Activated T-helper 2 cell treated with anti-CD3 and anti-CD28 coated beads, Interferon-gamma antibody, Interleukin-2, Interleukin-4, amounts not matched to agents 10 μg/mL and 5 μg/mL and 100 μg/mL, durations not matched to agents 14 hours and 24 hours and 36 hours (primary cell): ENCODE measurements at regions of chr9 and their contacts with region 1.

Region 1: DNA sequence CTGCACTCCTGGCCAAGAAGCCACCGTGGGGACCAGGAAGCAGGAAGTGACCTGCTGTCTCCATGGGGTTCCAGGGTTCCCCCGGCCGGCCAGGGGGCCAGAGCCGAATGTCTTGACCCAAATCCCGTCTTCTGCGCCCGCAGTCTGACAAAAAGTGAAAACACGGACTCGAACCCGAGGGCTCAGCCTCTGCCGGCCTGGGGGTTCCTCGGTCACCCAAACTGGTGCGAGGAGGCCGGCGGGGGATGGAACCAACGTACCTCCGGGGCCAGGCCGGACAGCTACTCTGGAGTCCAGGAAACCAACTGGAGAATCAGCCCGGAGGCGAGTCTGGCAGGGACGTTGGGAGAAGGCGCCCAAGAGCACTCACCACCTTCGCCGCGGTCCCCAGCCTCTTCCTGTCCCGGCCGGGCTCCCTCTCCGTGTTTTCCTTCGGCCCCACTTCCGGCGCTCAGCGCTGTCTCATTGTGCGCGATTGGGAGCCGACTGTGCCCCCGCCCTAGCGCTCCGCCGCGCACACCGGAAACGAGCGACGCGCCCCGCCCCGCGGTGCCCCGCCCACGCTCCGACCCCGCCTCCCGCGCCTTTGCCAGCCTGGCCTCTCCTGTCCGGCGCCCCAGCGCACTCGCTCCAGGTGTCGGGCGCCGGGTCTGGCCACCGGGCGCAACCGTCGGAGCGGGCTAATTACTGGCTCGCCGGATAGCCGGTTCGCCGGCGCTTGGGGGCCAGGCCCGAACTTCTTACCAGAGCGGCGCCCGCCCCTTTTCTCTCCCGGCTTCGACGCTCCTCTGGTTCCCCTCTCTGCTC is at the start of gene TUT7:
- DNase-seq: peak; percentile 95
- H3K4me3 Mint-ChIP-seq: peak within 1 kb of the TSS; percentile 94
- H3K27ac Mint-ChIP-seq: peak within 1 kb of the TSS; percentile 98
- H3K4me1 Mint-ChIP-seq: peaks cover 26% of the 10 kb centered on the region
- H3K27me3 Mint-ChIP-seq: no peaks in the 10 kb centered on the region
- total RNA-seq, gene TUT7: 41.5 and 41.9 TPM in 2 replicates

Region 2: GRCh38 chr9:85741875-85742629 is 612.2 kb before region 1 on chr9 and contains the start of gene AGTPBP1:
- intact Hi-C with region 1: loop called (anchors 2 kb)
- DNase-seq: peak; percentile 93
- H3K4me3 Mint-ChIP-seq: peak within 1 kb of the TSS; percentile 97
- H3K27ac Mint-ChIP-seq: peak within 1 kb of the TSS; percentile 97
- H3K4me1 Mint-ChIP-seq: peaks cover 40% of the 10 kb centered on the region
- H3K27me3 Mint-ChIP-seq: peaks cover 11% of the 10 kb centered on the region
- total RNA-seq, gene AGTPBP1: 26.5 and 28.1 TPM in 2 replicates

Region 3: GRCh38 chr9:86112057-86112456 is 242.2 kb before region 1 on chr9:
- intact Hi-C with region 1: loop called (anchors 2 kb)
- DNase-seq: no peak
- H3K4me3 Mint-ChIP-seq: no peak overlapping the region
- H3K27ac Mint-ChIP-seq: no peak overlapping the region
- H3K4me1 Mint-ChIP-seq: peaks cover under 1% of the 10 kb centered on the region
- H3K27me3 Mint-ChIP-seq: peaks cover 6% of the 10 kb centered on the region

Region 4: DNA sequence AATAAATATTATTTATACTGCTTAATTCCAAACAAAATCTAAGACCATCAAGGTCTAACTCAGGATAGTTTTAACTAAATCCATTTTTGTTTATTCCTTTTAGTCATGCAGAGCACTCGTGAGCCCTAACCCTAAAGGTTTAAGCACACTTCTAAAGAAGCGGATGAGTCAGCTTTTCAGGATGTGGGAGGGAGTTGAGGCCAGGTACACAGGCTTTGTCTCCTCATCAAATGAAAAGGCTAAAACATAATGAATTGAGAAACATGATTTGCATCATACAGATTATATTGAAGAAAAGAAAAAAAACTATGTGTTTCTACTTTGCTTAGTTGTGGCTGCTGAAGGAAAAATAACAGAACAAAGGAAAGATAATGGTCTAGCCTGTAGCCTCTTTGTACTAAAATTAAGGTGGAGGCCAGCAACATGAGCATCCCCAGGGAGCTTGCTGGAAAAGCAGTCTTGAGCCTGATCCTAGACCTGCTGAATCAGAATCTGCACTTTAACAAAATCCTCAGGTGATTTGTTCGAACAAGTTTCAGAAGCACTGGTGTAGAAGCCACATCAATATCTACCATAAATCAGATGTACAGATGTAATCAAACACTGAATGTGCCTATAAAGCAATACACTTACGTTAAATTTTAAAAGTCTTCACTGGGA is 50.8 kb before region 1 on chr9:
- intact Hi-C with region 1: loop called (anchors 2 kb)
- DNase-seq: peak; percentile 26
- H3K4me3 Mint-ChIP-seq: peak overlapping the region; percentile 64
- H3K27ac Mint-ChIP-seq: peak overlapping the region; percentile 95
- H3K4me1 Mint-ChIP-seq: peaks cover 48% of the 10 kb centered on the region
- H3K27me3 Mint-ChIP-seq: no peaks in the 10 kb centered on the region

Region 5: GRCh38 chr9:86948074-86948929 is 594.1 kb after region 1 on chr9:
- intact Hi-C with region 1: loop called (anchors 10 kb)
- DNase-seq: peak; percentile 61
- H3K4me3 Mint-ChIP-seq: peak overlapping the region; percentile 84
- H3K27ac Mint-ChIP-seq: no peak overlapping the region
- H3K4me1 Mint-ChIP-seq: peaks cover 10% of the 10 kb centered on the region
- H3K27me3 Mint-ChIP-seq: peaks cover 28% of the 10 kb centered on the region